Posterior cingulate gyrus (tissue), 11 donors: ENCODE measurements at regions of chr15 and their contacts with region 1.

Region 1: DNA sequence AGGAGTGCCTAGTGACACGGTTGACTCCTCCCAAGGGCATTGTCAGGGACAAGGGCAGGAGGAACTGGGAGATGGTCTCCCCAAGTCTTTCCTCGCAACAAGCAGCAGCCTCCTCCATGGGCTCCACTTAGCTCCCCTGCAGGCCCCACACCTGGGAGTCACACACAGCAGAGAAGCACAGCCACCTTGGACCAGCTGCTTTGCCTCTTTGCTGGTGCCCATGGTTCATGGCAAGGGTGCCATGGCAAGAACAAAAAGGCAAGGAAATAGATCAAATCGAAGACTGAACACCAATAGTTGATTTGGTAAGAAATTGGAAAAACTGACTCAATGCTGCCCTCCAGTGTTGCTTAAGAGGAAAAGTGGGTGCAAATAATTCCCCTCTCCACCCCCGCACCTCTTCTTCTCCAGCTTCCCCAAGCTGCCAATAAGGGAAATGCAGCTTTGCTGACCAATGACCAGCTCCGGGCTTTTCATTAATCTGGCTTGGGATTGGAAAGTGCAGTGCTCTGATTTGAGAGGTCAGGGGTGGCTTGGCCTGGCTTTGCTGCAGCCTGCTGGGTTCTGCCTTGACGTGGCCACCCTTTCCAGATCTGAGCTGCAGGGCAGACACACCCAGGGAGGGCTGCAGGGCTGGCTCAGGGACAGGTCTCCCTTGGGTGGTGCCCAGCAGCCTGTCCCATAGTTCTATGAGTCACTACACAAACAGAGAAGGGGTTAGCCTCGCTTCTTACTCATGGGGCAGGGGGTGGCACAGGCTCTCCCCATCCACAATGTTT is 162.0 kb downstream of the KLF13 start:
- DNase-seq: peak in 3 of 10 donors; percentile 42 to 89 (median 72)

Region 2: DNA sequence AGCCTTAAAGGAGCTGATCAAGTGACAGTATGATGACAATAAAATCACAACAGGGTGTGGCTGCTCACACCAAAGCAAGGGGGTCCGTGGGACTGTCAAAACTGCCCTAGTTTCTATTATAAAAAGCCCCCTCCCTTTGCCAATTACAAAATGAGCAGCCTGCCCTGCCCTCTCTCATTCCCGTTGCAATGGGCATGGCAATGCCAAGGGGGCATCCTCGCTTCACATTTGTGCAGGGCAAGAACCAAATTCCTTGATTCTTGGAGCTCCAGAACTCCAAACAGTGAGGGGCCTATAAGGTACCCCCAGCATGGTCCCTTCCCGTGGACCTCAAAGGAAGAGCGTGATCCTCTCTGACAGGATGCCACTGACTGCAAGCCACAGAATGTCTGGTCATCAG is 282.2 kb before region 1 on chr15:
- intact Hi-C with region 1: loop called (anchors 2 kb)
- DNase-seq: peak in 1 of 10 donors; percentile 61

Region 3: DNA sequence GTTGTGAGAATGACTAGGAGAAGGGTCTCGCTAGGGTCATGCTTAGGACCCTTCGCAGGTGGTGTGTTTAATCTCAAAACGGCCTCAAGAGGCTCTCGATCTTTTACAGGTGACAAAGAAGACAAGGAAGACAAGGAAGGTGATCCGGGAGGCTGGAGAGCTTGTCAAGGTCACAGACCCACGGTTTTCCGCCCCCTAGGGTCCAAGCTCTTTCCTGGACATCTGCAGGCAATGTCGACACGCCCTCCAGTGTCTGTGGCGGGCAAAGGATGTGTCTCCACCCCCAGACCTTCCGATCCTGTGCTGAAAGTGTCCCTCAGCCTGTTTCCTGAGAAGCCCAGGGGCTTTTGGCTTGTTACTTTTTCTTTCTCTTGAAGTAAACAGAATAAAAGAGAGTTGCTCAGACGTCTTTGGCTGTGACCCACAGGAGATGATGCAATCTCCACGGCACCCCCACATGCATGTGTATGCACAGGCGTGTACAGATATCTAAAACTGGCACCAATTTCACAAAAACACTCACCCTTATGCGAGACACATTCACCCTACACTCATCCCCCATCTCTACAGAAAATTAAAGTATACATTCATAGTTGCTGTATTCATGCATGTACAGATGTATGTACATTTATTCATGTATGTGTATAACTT is 53.2 kb before region 1 on chr15:
- intact Hi-C with region 1: no loop called
- DNase-seq: peak in 8 of 10 donors; percentile 65 to 95 (median 78)